Endothelial cell of umbilical vein (primary cell): ENCODE measurements at regions of chr7 and their contacts with region 1.

Region 1: GRCh38 chr7:12067141-12067831 is 143.8 kb upstream of the TMEM106B start:
- DNase-seq: peak; percentile 60
- H3K4me3 ChIP-seq: no peak overlapping the region
- H3K27ac ChIP-seq: no peak overlapping the region
- H3K4me1 ChIP-seq: no peaks in the 10 kb centered on the region
- H3K27me3 ChIP-seq: no peaks in the 10 kb centered on the region
- CTCF ChIP-seq: peak; percentile 57 to 62
- POLR2A ChIP-seq: no peak

Region 2: DNA sequence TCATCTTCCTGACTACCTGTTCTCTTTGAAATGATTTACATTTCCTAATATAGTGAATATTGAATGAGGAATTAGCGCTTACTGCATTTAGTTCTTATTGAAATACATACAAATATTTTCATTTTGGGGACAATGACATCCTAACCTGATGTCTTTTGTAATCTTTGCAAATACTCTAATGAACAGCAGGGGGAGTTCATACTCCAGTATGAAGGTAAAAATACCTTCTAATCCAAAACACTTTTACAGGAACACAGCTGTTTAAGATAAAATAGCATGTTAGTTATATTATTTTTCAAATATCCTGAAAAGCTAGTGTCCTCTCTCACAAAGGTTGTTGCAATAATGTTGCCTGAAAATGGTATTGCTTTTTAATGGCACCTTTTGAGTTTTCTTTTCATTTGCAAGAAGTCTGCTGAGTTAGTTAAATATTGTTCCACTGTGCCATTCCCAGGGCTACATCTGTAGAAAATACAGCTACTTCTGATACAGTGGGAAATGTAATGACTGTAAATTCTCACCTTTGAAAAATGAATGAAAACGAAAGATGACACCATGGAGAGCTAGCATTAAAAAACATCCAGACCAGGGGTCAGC is 693.6 kb before region 1 on chr7:
- CTCF ChIA-PET with region 1: interaction called, 4 read pairs
- POLR2A ChIA-PET with region 1: no interaction called
- dilution Hi-C with region 1: no loop called
- intact Hi-C with region 1: loop called (anchors 5 kb)
- DNase-seq: peak; percentile 38
- H3K4me3 ChIP-seq: no peak overlapping the region
- H3K27ac ChIP-seq: no peak overlapping the region
- H3K4me1 ChIP-seq: no peaks in the 10 kb centered on the region
- H3K27me3 ChIP-seq: no peaks in the 10 kb centered on the region
- CTCF ChIP-seq: peak; percentile 16 to 29
- POLR2A ChIP-seq: no peak

Region 3: GRCh38 chr7:11427686-11428273 is 639.5 kb before region 1 on chr7:
- CTCF ChIA-PET with region 1: interaction called, 6 read pairs
- POLR2A ChIA-PET with region 1: no interaction called
- dilution Hi-C with region 1: no loop called
- intact Hi-C with region 1: loop called (anchors 1 kb)
- DNase-seq: peak; percentile 86
- H3K4me3 ChIP-seq: no peak overlapping the region
- H3K27ac ChIP-seq: peak overlapping the region; percentile 1
- H3K4me1 ChIP-seq: peaks cover 5% of the 10 kb centered on the region
- H3K27me3 ChIP-seq: no peaks in the 10 kb centered on the region
- CTCF ChIP-seq: peak; percentile 43 to 48
- POLR2A ChIP-seq: no peak

Region 4: GRCh38 chr7:11716185-11716584 is 351.1 kb before region 1 on chr7:
- CTCF ChIA-PET with region 1: no interaction called
- POLR2A ChIA-PET with region 1: no interaction called
- dilution Hi-C with region 1: no loop called
- intact Hi-C with region 1: no loop called
- DNase-seq: peak; percentile 98
- H3K4me3 ChIP-seq: no peak overlapping the region
- H3K27ac ChIP-seq: peak overlapping the region; percentile 89
- H3K4me1 ChIP-seq: peaks cover 42% of the 10 kb centered on the region
- H3K27me3 ChIP-seq: no peaks in the 10 kb centered on the region
- CTCF ChIP-seq: no peak
- POLR2A ChIP-seq: no peak

Region 5: GRCh38 chr7:12056381-12056780 is 10.9 kb before region 1 on chr7:
- CTCF ChIA-PET with region 1: no interaction called
- POLR2A ChIA-PET with region 1: no interaction called
- dilution Hi-C with region 1: no loop called
- intact Hi-C with region 1: no loop called
- DNase-seq: no peak
- H3K4me3 ChIP-seq: no peak overlapping the region
- H3K27ac ChIP-seq: no peak overlapping the region
- H3K4me1 ChIP-seq: no peaks in the 10 kb centered on the region
- H3K27me3 ChIP-seq: no peaks in the 10 kb centered on the region
- CTCF ChIP-seq: no peak
- POLR2A ChIP-seq: no peak

Region 6: DNA sequence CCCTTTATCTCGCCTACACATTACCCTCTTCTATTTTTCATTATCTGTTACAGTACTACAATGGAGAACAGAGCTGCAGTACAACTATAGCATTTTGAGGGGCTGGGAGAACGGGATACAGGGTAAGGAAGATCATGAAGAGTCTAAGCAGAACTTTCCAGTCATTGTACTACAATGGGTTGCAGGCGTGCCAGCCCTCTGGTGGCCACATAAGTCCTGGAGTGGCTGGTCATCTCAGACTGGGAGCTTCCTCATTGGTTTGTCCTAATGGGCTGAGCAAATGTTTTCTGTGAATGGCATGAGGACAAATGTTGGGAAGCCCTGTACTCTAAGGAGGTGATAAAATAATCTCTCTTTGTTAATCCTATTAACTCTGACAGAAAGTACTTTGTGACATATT is 176.8 kb after region 1 on chr7:
- CTCF ChIA-PET with region 1: interaction called, 6 read pairs
- POLR2A ChIA-PET with region 1: interaction called, 7 read pairs
- dilution Hi-C with region 1: no loop called
- intact Hi-C with region 1: loop called (anchors 1 kb)
- DNase-seq: peak; percentile 36
- H3K4me3 ChIP-seq: no peak overlapping the region
- H3K27ac ChIP-seq: no peak overlapping the region
- H3K4me1 ChIP-seq: no peaks in the 10 kb centered on the region
- H3K27me3 ChIP-seq: no peaks in the 10 kb centered on the region
- CTCF ChIP-seq: peak; percentile 48 to 64
- POLR2A ChIP-seq: no peak

Region 7: GRCh38 chr7:12291870-12292269 is 224.6 kb after region 1 on chr7:
- CTCF ChIA-PET with region 1: interaction called, 6 read pairs
- POLR2A ChIA-PET with region 1: no interaction called
- dilution Hi-C with region 1: no loop called
- intact Hi-C with region 1: loop called (anchors 1 kb)
- DNase-seq: peak; percentile 13
- H3K4me3 ChIP-seq: no peak overlapping the region
- H3K27ac ChIP-seq: no peak overlapping the region
- H3K4me1 ChIP-seq: no peaks in the 10 kb centered on the region
- H3K27me3 ChIP-seq: peaks cover 4% of the 10 kb centered on the region in 2 experiments
- CTCF ChIP-seq: peak; percentile 47 to 49
- POLR2A ChIP-seq: no peak

Region 8: GRCh38 chr7:12322284-12322902 is 255.1 kb after region 1 on chr7:
- CTCF ChIA-PET with region 1: interaction called, 21 read pairs
- POLR2A ChIA-PET with region 1: no interaction called
- dilution Hi-C with region 1: no loop called
- intact Hi-C with region 1: loop called (anchors 1 kb)
- DNase-seq: peak; percentile 51
- H3K4me3 ChIP-seq: no peak overlapping the region
- H3K27ac ChIP-seq: no peak overlapping the region
- H3K4me1 ChIP-seq: no peaks in the 10 kb centered on the region
- H3K27me3 ChIP-seq: no peaks in the 10 kb centered on the region
- CTCF ChIP-seq: peak; percentile 32 to 38
- POLR2A ChIP-seq: no peak

Region 9: DNA sequence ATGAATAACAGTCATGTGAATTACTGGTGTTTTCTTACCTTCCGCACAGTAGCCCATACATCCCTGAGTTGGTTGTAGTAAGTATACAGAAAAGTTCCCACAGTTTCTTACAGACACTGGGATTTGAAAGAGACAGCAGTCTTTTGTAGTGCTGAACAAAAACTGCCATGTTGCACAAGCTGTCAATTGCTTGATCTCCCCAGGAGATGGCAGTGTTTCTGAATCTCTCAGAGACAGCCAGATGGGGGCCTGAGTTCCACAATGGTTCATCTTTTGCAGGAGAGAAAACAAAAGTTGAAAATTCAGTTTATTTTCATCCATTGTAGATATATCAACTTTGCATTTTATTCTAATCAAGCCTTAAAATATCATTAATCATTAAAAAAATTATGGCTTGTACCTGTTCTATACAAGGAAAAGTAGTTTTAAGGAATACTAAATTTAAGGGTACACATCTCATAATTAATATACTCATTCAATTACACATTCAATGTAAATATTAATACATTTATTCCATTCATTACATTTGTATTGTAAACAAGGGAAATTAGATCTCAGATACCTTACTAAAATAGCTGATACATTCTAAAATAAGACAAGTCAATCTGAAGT is 321.9 kb after region 1 on chr7:
- CTCF ChIA-PET with region 1: no interaction called
- POLR2A ChIA-PET with region 1: no interaction called
- dilution Hi-C with region 1: no loop called
- intact Hi-C with region 1: loop called (anchors 2 kb)
- DNase-seq: peak; percentile 59
- H3K4me3 ChIP-seq: no peak overlapping the region
- H3K27ac ChIP-seq: no peak overlapping the region
- H3K4me1 ChIP-seq: no peaks in the 10 kb centered on the region
- H3K27me3 ChIP-seq: no peaks in the 10 kb centered on the region
- CTCF ChIP-seq: peak; percentile 79
- POLR2A ChIP-seq: no peak